Activated CD4-positive, alpha-beta memory T cell treated with anti-CD3 and anti-CD28 coated beads, Interleukin-2, amount 10 ng/mL, durations not matched to agents 7 days and 5 days (primary cell): ENCODE measurements at regions of chr20 and their contacts with region 1.

Region 1: DNA sequence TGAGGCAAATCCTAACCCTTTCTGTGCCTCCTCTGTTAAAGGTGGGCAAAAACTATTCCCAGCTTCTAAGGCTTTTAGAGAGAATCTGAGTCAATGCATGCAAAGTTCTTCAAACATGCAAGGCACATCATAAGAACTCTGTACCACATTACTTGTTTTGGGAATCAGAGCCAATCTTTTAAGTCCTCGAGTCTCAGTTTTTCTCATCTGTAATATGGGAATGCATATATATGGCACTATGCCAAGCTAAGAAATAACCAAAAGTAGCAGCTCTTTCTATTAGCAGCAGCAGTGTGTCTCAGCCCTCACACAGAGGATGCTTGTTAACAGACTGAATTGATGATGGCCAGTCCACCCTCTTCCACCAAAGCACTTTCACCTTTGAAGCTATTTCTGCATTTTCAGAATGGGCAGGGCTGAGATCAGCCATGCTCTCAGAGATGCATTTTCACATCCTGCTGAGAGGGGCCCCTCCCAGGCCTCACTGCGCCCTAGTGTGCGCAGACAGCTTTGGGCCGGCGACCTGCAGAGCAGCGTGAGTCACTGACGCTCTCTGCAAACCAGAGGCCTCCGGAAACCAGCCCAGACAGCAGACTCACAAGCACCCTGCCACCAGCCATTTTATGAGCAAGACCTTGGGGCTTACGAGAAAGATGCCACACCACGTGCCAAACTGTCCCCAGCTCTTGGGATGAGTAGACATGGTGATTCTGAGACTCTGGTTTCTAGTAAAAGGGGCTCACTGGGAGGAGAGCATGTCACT is 138.0 kb downstream of the NFATC2 start:
- DNase-seq: peak; percentile 95
- H3K4me3 Mint-ChIP-seq: peak overlapping the region; percentile 15
- H3K27ac Mint-ChIP-seq: peak overlapping the region; percentile 98
- H3K4me1 Mint-ChIP-seq: peaks cover 93% of the 10 kb centered on the region
- H3K27me3 Mint-ChIP-seq: no peaks in the 10 kb centered on the region

Region 2: DNA sequence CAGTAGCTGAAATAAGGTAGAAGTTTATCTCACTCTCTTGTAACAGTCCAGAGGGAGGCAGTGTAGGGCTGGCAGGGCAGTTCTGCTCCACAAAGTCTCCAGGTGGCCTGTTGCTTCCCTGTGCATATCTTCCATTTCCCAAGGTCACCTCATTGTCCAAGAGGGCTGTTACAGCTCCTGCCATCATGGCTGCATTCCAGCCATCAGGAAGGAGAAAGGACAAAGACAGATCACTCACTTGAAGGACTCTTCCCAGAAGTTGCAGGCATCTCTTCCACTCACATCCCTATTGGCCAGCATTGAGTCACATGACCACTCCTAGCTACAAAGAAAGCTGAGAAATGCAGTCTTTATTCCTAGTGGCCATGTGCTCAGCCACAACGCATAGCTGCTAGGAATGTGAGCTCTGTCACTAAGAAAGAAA is 231.5 kb before region 1 on chr20:
- CTCF ChIA-PET with region 1: no interaction called
- POLR2A ChIA-PET with region 1: no interaction called
- DNase-seq: no peak
- H3K4me3 Mint-ChIP-seq: no peak overlapping the region
- H3K27ac Mint-ChIP-seq: no peak overlapping the region
- H3K4me1 Mint-ChIP-seq: no peaks in the 10 kb centered on the region
- H3K27me3 Mint-ChIP-seq: peaks cover 31% of the 10 kb centered on the region

Region 3: GRCh38 chr20:51385646-51386530 is 18.6 kb before region 1 on chr20:
- CTCF ChIA-PET with region 1: interaction called, 18 read pairs
- POLR2A ChIA-PET with region 1: interaction called, 38 read pairs
- DNase-seq: peak; percentile 49
- H3K4me3 Mint-ChIP-seq: no peak overlapping the region
- H3K27ac Mint-ChIP-seq: peak overlapping the region; percentile 61
- H3K4me1 Mint-ChIP-seq: peaks cover 73% of the 10 kb centered on the region
- H3K27me3 Mint-ChIP-seq: no peaks in the 10 kb centered on the region

Region 4: DNA sequence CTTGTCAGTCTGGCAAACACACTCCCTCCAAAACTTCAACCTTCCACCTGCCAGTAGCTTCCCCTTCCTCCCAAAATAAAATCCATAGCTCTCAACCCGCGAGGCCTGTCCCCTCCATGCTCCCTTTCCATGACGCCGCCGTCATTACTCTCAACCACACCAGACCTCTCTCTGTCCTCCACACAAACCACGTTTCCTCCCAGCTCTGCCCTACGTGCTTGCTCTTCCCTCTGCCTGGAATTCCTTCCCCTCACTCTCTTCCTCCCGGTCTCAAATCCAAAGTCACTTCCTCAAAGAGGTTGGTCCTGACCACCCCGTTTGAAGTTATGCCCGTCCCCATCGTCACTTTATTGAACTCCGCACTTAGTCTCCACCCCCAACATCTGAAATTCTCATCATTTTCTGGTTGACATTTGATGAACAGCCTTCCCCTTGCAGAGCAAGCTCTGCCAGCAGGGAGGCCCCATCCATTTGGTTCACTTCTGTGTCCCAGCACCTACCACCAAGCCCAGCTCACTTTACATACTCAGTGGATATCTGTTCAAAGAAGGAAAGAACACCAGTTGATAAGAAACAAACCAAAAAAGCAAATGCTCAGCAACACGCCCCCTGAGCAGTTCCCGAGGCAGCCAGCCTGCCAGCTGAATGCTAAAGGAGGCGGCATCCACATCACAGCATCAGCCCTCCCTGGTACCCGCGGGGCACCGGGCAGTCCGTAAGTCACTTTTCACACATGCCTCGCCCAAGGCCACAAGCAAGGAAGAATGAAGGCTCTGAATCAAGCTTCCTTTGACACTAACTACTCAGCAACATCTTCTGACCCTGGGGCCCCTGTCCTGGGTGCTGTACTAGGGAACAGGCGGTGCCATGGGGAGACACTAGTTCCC is 13.0 kb after region 1 on chr20:
- CTCF ChIA-PET with region 1: interaction called, 28 read pairs
- POLR2A ChIA-PET with region 1: interaction called, 209 read pairs
- DNase-seq: peak; percentile 55
- H3K4me3 Mint-ChIP-seq: peak overlapping the region; percentile 1
- H3K27ac Mint-ChIP-seq: peak overlapping the region; percentile 85
- H3K4me1 Mint-ChIP-seq: peaks cover 97% of the 10 kb centered on the region
- H3K27me3 Mint-ChIP-seq: no peaks in the 10 kb centered on the region

Region 5: DNA sequence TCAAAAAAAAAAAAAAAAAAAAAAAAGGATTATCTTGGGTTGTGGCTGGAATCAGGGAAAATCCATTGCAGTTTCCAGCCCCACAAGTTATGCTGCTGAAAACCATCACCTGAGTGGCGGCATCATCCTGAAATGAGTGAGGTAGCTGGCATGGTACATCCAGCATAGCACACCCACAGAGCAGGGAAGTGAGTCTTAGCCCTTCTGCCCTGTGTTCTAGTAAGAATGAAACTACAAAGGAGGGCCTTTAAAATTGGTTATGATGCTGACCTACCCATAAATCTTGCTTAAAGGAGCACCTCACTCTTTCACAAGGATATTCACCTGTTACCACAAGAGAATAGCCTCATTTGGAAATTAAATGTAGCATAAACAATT is 18.8 kb after region 1 on chr20:
- CTCF ChIA-PET with region 1: interaction called, 28 read pairs
- POLR2A ChIA-PET with region 1: interaction called, 209 read pairs
- DNase-seq: peak; percentile 56
- H3K4me3 Mint-ChIP-seq: peak overlapping the region; percentile 53
- H3K27ac Mint-ChIP-seq: peak overlapping the region; percentile 90
- H3K4me1 Mint-ChIP-seq: peaks cover 95% of the 10 kb centered on the region
- H3K27me3 Mint-ChIP-seq: no peaks in the 10 kb centered on the region

Region 6: DNA sequence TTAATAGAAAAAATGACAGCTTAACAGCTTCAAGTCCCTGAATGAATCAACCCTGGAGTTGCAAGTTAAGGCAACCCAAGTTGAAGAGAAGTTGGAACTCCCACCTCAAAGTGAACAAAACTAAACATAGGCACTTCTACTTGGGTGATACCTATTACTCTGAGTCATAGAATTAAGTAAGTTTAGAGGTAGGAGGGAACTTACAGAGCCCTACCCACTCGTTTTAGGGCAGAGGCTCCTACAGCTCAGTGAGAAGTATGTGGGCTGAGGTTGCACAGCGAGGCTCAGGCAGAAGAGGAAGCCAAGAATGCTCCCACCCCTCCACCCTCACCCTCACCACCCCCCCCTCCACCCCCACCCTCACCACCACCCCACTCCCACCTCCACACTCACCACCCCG is 95.8 kb after region 1 on chr20:
- CTCF ChIA-PET with region 1: no interaction called
- POLR2A ChIA-PET with region 1: interaction called, 13 read pairs
- DNase-seq: peak; percentile 66
- H3K4me3 Mint-ChIP-seq: no peak overlapping the region
- H3K27ac Mint-ChIP-seq: peak overlapping the region; percentile 75
- H3K4me1 Mint-ChIP-seq: peaks cover 84% of the 10 kb centered on the region
- H3K27me3 Mint-ChIP-seq: no peaks in the 10 kb centered on the region

Region 7: DNA sequence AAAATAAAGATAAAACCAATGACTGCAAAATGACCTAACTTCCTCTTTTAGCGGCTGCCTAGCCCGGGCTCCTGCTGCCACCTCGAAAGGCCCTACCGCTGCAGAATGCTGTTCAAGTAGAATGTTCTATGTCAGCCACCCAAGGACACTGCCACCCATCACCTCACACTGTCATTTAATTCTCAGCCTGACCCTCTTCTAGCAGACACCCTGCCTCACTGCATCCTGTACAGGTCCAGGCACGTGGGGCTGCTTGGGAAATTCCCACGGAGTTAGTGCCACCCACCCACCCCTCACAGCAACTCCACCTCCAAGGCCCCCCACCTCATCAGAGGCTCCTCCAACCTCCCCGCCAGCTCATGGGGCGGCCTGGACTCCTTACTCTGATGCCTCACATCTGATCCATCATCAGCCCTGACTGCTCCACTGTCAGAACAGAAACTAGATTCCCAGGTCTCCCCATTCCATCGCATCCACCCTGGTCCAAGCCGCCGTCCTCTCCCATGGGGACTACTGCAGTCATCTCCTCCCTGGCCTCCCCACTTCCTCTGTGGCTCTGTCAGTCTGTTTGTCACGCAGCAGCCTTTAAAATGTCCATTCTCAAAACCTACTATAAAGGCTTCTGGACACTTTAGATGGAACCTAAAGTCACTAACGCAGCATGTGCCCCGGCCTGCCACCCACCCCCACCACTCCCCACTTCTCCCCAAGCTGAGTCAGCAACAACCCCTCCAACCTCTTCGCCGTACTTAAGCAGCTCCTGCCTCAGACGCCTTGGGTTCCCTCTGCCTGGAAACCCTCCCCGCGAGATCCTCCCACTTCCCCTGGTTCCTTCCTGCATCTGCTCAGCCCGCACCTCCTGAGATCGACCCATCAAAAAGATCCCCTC is 121.0 kb after region 1 on chr20:
- CTCF ChIA-PET with region 1: no interaction called
- POLR2A ChIA-PET with region 1: interaction called, 10 read pairs
- DNase-seq: peak; percentile 55
- H3K4me3 Mint-ChIP-seq: peak overlapping the region; percentile 69
- H3K27ac Mint-ChIP-seq: peak overlapping the region; percentile 90
- H3K4me1 Mint-ChIP-seq: peaks cover 76% of the 10 kb centered on the region
- H3K27me3 Mint-ChIP-seq: no peaks in the 10 kb centered on the region